PC-3 (cell line): ENCODE measurements at regions of chr11 and their contacts with region 1.

Region 1: GRCh38 chr11:38392176-38392575 is 1794.1 kb upstream of the RAG2 start:
- DNase-seq: peak; percentile 75
- ATAC-seq: peak; percentile 99
- H3K4me3 ChIP-seq: no peak overlapping the region
- H3K27ac ChIP-seq: no peak overlapping the region
- H3K4me1 ChIP-seq: peaks cover 11% of the 10 kb centered on the region
- H3K27me3 ChIP-seq: no peaks in the 10 kb centered on the region
- CTCF ChIP-seq: no peak

Region 2: GRCh38 chr11:38182126-38182866 is 209.9 kb before region 1 on chr11:
- CTCF ChIA-PET with region 1: no interaction called
- POLR2A ChIA-PET with region 1: no interaction called
- intact Hi-C with region 1: no loop called
- DNase-seq: no peak
- ATAC-seq: no peak
- H3K4me3 ChIP-seq: no peak overlapping the region
- H3K27ac ChIP-seq: no peak overlapping the region
- H3K4me1 ChIP-seq: no peaks in the 10 kb centered on the region
- H3K27me3 ChIP-seq: no peaks in the 10 kb centered on the region
- CTCF ChIP-seq: no peak

Region 3: DNA sequence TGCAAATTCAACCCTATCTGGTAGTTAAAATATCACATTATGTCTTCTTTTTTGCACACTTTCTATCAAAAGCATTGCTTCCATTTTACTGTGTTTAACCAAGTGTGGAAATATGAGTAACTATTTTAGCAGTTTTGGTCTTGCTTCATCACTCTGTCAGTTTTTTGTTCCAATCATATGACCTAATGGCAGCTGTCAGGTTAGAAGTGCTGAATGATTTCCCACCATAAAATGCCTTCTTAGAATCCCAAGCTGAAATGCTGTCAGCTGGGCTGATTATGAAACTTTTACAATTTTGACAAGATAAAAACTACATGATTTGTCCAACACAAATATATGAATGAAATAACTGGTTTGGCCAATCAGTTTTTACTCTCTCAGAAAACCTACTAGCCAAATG is 139.6 kb before region 1 on chr11:
- CTCF ChIA-PET with region 1: no interaction called
- POLR2A ChIA-PET with region 1: no interaction called
- intact Hi-C with region 1: no loop called
- DNase-seq: no peak
- ATAC-seq: no peak
- H3K4me3 ChIP-seq: no peak overlapping the region
- H3K27ac ChIP-seq: no peak overlapping the region
- H3K4me1 ChIP-seq: no peaks in the 10 kb centered on the region
- H3K27me3 ChIP-seq: no peaks in the 10 kb centered on the region
- CTCF ChIP-seq: no peak

Region 4: DNA sequence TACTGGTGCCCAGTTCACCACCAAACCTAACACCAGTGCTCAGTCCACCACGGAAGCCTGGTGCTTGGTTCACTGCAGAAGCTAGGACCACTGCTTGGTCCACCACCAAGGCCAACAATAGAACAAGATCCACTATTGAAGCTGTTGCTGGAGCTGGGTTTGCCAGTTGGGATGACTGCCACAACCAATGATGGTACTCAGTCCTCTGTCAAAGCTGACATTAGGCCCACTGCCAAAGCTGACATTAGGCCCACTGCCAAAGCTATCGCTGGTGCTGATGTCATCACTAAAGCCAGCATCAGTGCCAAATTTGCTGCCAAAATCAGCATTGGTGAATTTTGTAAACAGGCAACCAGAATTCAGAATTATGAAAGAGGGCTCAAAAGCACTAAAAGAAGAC is 56.1 kb after region 1 on chr11:
- CTCF ChIA-PET with region 1: no interaction called
- POLR2A ChIA-PET with region 1: no interaction called
- intact Hi-C with region 1: loop called (anchors 5 kb)
- DNase-seq: peak; percentile 46
- ATAC-seq: no peak
- H3K4me3 ChIP-seq: no peak overlapping the region
- H3K27ac ChIP-seq: no peak overlapping the region
- H3K4me1 ChIP-seq: peaks cover 6% of the 10 kb centered on the region; the same call in 1 of the 2 replicates
- H3K27me3 ChIP-seq: no peaks in the 10 kb centered on the region
- CTCF ChIP-seq: no peak

Region 5: DNA sequence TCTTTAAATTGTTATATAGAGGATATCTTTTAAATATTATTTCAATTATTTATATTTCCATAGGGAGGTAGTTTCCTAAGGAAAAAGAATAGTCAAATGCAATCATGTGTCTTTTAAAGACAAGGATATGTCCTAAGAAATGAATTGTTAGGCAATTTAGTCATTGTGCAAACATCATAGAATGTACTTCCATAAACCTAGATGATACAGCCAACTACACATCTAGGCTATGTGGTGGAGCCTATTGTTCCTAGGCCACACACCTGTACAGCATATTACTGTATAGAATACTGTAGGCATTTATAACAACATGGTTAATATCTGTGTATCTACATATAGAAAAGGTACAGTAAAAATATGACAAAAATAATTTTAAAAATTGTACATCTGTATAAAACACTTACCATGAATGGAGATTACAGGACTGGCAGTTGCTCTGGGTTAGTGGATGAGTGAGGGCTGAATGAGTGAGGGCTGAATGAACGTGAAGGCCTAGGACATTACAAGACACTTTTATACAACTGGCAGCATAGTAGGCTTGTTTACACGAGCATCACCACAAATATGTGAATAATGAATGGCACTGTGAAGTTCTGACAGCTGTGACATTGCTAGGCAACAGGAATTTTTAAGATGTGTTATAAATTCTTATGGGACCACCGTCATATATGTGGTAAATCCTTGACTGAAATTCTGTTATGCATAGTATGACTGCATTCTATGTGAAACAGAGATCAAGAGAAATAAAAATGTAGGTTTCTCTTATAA is 84.8 kb after region 1 on chr11:
- CTCF ChIA-PET with region 1: no interaction called
- POLR2A ChIA-PET with region 1: no interaction called
- intact Hi-C with region 1: no loop called
- DNase-seq: peak; percentile 67
- ATAC-seq: peak; percentile 99
- H3K4me3 ChIP-seq: no peak overlapping the region
- H3K27ac ChIP-seq: no peak overlapping the region
- H3K4me1 ChIP-seq: peaks cover 15% of the 10 kb centered on the region
- H3K27me3 ChIP-seq: no peaks in the 10 kb centered on the region
- CTCF ChIP-seq: no peak

Region 6: DNA sequence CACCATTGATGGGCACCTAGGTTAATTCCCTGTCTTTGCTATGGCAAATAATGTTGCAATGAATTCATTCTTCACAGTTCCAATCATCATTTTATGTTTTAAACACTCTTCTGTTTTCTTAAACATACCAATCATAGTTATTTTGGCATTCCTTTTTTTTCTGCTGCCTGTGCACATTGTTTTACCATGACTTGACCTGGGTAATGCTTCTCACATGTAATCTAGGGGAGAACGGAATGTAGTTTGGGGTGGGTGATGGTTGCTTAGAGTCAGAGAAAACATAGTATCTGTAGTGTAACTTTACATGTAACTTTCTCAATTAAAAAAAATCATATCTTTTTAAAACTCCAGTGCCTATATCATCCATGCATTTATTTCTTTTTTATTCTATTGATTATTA is 151.1 kb after region 1 on chr11:
- CTCF ChIA-PET with region 1: no interaction called
- POLR2A ChIA-PET with region 1: no interaction called
- intact Hi-C with region 1: loop called (anchors 10 kb)
- DNase-seq: peak; percentile 6
- ATAC-seq: no peak
- H3K4me3 ChIP-seq: no peak overlapping the region
- H3K27ac ChIP-seq: no peak overlapping the region
- H3K4me1 ChIP-seq: peaks cover 12% of the 10 kb centered on the region
- H3K27me3 ChIP-seq: no peaks in the 10 kb centered on the region
- CTCF ChIP-seq: no peak